ENCODE measurements at regions of chr17 and their contacts with region 1.

Region 1: DNA sequence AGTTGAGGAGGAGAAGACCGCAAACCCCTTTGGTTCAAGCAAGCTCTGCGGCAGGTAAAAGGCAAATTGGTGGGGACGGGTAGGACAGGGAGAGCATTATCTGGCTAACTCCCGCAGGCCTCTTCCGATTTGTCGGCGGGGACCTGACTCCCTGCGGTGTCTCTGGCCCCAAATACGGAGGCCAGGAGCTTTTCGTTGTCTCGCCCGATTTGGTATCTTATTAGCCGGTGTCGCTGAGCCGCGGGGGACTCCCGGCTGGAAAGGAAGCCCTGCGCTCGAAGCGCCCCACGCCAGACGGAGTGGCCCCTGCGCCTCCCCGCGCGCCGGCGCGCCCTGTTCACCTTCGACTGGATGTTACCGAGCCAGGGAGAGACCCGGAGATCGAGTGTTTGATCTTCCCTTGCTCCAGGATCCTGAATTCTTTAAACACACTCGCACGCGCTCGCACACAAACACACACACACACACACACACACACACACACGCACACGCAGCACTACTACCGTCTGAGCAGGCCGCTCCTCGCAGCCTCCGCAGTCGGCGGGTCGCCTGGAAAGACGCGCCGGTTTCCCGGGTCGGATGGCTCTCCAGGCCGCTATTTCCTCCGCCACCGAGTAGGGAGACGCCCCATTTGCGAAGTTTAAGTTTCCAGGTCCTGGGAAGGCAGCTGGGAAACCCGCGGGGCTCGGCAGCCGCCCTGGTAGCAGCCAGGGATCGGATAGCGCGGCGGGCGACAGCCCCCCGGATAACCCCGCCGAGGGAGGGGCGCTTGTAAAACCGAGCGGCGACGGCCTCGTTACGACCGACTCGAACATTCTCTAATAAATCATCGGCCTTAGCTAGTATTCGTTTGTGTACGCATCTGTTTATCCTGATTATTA is 3.3 kb downstream of the PRAC1 start:
- DNase-seq: peak; percentile 80
- H3K4me3 ChIP-seq: peak overlapping the region; percentile 72
- H3K27ac ChIP-seq: peak overlapping the region; percentile 98
- H3K4me1 ChIP-seq: peaks cover 32% of the 10 kb centered on the region
- H3K27me3 ChIP-seq: no peaks in the 10 kb centered on the region
- CTCF ChIP-seq: no peak

Region 2: DNA sequence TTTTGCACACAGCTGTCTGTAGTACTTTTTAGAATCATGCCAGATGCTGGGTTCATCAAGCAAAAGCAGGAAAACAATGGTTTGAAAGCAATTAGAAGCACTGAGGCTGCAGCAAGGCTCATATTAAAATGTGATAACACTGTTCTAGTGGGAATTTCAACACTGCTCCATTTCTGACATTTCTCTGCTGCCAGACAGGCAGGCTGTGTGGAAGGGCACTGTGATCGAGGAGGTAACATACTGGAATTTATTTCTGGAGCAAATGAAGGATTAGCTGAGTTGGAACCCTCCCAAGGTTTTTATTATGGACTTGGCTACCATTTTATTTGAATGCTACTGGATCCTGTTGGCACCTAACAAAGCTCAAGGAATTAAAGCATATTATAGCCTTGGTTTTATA is 355.8 kb before region 1 on chr17:
- CTCF ChIA-PET with region 1: no interaction called
- POLR2A ChIA-PET with region 1: no interaction called
- intact Hi-C with region 1: no loop called
- DNase-seq: no peak
- H3K4me3 ChIP-seq: no peak overlapping the region
- H3K27ac ChIP-seq: no peak overlapping the region
- H3K4me1 ChIP-seq: peaks cover 17% of the 10 kb centered on the region
- H3K27me3 ChIP-seq: peaks cover 4% of the 10 kb centered on the region
- CTCF ChIP-seq: no peak

Region 3: GRCh38 chr17:48767263-48767774 is 48.3 kb after region 1 on chr17:
- CTCF ChIA-PET with region 1: no interaction called
- POLR2A ChIA-PET with region 1: no interaction called
- intact Hi-C with region 1: no loop called
- DNase-seq: no peak
- H3K4me3 ChIP-seq: no peak overlapping the region
- H3K27ac ChIP-seq: no peak overlapping the region
- H3K4me1 ChIP-seq: peaks cover 8% of the 10 kb centered on the region
- H3K27me3 ChIP-seq: no peaks in the 10 kb centered on the region
- CTCF ChIP-seq: no peak

Region 4: DNA sequence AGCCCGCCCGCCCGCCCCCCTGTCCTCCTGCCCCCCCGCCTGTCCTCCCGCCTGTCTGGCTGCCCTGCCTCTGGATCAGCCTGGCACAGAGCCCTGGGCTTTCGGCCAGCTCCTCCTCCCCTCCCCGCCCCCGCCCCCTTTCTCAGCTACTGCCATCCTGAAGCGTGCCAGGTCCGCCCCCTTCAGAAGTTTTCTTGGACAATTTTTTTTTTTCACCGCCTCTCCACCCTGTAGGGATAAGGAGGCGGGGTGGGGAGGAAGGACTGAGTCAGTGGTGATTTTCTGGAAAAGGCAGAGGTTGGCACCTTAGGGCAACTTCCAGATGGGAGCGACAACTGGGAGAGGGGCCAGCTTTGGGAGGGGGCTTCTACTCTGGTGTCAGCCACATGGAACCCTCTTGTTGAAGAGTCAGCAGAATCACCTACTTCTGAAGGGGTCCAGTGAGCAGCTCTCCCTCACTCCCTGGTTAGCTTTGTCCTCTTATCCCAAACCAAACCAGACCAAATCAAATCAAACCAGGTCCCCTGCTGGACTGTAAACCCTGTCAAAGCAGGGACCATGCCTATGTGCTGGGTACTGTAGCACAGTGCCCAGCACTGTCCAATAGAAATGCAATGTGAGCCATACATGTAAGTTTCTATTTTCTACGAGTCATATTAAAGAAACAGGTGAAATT is 297.9 kb after region 1 on chr17:
- CTCF ChIA-PET with region 1: no interaction called
- POLR2A ChIA-PET with region 1: no interaction called
- intact Hi-C with region 1: loop called (anchors 10 kb)
- DNase-seq: peak; percentile 97
- H3K4me3 ChIP-seq: peak overlapping the region; percentile 13
- H3K27ac ChIP-seq: peak overlapping the region; percentile 34
- H3K4me1 ChIP-seq: peaks cover 92% of the 10 kb centered on the region
- H3K27me3 ChIP-seq: no peaks in the 10 kb centered on the region
- CTCF ChIP-seq: no peak

Measured in A673 (cell line).